ENCODE measurements at regions of chr3 and their contacts with region 1.

Region 1: GRCh38 chr3:42101048-42101447 is 9.9 kb downstream of the TRAK1 start:
- DNase-seq: peak; percentile 72
- H3K4me3 ChIP-seq: no peak overlapping the region
- H3K27ac ChIP-seq: no peak overlapping the region
- H3K4me1 ChIP-seq: peaks cover 37% of the 10 kb centered on the region
- H3K27me3 ChIP-seq: no peaks in the 10 kb centered on the region
- CTCF ChIP-seq: no peak

Region 2: GRCh38 chr3:41893977-41894376 is 207.1 kb before region 1 on chr3:
- CTCF ChIA-PET with region 1: no interaction called
- dilution Hi-C with region 1: no loop called
- in situ Hi-C with region 1: loop called in 1 of 2 experiments (anchors 10 kb)
- intact Hi-C with region 1: loop called (anchors 1 kb)
- DNase-seq: peak; percentile 36
- H3K4me3 ChIP-seq: no peak overlapping the region
- H3K27ac ChIP-seq: no peak overlapping the region
- H3K4me1 ChIP-seq: no peaks in the 10 kb centered on the region
- H3K27me3 ChIP-seq: no peaks in the 10 kb centered on the region
- CTCF ChIP-seq: peak; percentile 29 to 54

Region 3: DNA sequence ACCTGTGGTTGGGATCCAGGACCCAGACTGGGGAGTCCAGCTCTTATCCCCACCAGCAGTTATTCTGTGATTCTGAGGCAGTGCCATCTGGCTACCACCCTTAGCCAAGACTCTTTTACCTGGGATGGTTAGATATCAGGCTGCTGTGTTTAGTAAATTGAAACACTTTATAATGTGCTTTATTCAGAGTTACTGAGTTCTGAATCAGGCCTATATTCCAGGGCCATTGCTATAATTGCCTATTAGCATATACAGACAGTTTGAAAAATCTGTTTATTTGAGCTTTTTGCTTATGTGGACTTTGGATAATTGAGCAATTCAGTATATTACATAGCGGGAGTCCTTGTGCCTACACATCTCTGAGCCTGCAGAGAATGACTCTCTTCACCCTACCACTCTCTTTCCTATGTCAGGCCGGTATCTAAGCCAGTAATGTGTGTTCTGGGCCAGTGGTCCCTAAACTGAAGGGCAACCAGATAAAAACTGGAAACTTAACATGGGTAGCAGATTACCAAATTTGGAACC is 55.3 kb before region 1 on chr3:
- CTCF ChIA-PET with region 1: no interaction called
- dilution Hi-C with region 1: loop called (anchors 5 kb)
- in situ Hi-C with region 1: no loop called
- intact Hi-C with region 1: no loop called
- DNase-seq: no peak
- H3K4me3 ChIP-seq: no peak overlapping the region
- H3K27ac ChIP-seq: no peak overlapping the region
- H3K4me1 ChIP-seq: peaks cover 27% of the 10 kb centered on the region
- H3K27me3 ChIP-seq: no peaks in the 10 kb centered on the region
- CTCF ChIP-seq: no peak

Region 4: DNA sequence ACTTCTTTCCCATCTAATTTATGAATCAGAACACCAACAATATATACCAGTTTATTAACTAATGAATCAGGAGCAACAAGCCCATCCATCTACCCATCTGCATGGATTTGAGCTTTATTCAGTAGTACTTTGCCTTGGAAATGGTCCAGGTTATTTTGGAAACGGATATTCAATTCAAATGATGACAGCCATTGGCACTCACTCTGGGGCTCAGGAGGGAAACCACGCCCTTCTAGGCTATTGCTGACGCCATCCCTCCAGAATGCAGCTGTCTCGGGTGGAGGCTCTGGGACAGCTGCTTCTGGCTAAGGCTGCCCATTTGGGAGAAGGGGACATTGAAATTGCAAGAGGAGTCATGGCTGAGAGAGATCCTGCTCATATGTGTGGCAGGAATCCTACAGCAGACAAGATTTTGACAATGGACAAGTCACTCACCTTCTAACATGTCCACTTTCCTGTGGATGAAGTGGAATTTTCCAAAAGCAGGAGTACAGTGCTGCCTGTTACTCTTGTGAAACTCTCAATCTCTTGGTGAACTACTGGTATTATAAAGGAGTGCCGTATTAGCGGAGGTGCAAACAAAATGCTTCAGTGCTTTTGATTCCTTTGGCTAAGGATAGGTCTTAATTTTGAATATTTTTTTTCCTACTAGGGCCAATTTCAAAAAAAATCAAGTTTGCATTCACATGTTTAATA is 39.2 kb before region 1 on chr3:
- CTCF ChIA-PET with region 1: no interaction called
- dilution Hi-C with region 1: no loop called
- in situ Hi-C with region 1: no loop called
- intact Hi-C with region 1: loop called (anchors 2 kb)
- DNase-seq: peak; percentile 83
- H3K4me3 ChIP-seq: no peak overlapping the region
- H3K27ac ChIP-seq: peak overlapping the region; percentile 88
- H3K4me1 ChIP-seq: peaks cover 25% of the 10 kb centered on the region
- H3K27me3 ChIP-seq: no peaks in the 10 kb centered on the region
- CTCF ChIP-seq: no peak